GM10248 (cell line): ENCODE measurements at regions of chr4 and their contacts with region 1.

Region 1: DNA sequence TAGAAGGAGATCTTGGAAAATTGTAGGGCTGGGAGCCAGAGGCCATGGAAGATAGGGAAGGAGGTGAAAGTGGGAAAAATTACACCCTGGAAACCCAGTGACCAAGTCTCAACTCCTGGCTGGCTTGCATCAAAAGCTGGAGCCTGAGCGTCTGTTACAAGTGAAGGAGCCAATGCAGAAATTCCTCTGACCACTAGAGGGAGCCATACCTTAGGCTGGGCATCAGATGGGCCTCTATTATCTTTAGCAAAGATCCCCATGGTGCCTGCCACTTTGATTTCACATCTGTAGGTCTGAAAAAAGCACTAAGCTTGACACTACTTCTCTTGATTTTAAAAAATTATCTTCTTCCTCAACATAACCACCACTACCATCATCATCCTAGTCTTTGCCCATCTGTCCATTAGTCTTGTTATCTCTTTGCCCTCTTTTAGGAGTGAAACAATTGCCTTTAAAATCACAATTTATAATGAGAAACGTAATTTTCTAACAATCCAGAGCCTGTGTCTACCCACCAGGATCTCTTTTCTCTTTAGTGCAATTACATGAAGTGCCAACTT is 62.9 kb downstream of the ANAPC4 start:
- DNase-seq: peak; percentile 79
- CTCF ChIP-seq: peak; percentile 86

Region 2: DNA sequence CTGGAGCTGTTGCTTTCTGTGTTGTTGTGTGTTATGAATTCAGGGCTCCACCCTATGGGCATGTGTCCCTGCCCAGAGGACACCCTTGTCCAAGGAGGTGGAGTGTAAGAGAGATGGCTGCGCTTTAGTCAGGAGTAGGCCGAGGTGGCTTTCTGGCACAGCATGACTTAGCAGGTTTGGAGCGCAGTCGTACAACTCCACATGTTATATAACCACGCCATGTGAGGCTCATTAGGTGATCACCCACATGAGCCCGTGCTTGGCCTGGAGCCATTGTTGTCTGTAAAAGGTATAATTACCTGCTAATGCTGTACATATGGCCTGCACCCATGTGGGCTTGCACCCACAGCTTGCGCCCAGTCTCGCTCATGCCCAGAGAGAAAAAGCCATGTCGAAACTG is 78.7 kb before region 1 on chr4:
- CTCF ChIA-PET with region 1: no interaction called
- POLR2A ChIA-PET with region 1: no interaction called
- DNase-seq: no peak
- CTCF ChIP-seq: no peak

Region 3: DNA sequence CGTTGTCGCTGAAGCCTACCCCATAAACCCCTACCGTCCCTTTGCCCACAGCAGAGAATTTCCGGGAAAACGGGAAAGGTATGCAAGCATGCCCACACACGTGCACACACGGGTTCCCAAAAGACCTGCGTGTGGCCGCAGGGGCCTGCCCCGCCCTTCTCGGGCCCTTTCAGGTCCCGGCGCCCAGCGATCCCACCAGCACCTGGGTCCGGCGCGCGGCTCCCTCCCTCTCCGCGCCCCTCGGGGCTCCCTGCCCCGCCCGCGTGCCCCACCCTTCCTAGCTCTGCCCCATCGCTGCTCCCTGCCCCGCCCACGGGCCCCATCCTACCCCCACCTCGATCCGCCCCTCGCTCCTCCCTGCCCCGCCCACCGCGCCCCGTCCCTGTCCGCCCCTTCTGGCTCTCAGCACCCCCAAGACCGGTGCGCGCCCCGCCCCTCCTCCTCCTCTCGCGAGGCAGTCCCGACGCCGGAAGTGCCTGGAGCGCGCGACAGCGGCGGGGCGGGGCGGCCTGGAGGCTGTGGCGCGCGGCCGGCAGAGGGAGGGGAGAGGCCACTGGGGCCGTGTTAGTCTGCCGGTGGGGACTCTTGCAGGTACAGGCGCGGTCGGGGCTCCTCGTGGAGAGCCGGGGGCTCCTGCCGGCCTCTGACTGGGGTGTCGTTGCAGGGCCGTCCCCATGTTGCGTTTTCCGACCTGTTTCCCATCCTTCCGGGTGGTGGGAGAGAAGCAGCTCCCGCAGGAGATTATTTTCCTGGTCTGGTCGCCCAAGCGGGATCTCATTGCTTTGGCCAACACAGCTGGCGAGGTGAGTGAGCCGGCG is 63.0 kb before region 1 on chr4 and contains the start of gene ANAPC4:
- CTCF ChIA-PET with region 1: interaction called, 10 read pairs
- POLR2A ChIA-PET with region 1: no interaction called
- DNase-seq: peak; percentile 100
- CTCF ChIP-seq: no peak

Region 4: GRCh38 chr4:25421816-25422525 is 18.0 kb before region 1 on chr4:
- CTCF ChIA-PET with region 1: interaction called, 96 read pairs
- POLR2A ChIA-PET with region 1: no interaction called
- DNase-seq: no peak
- CTCF ChIP-seq: no peak

Region 5: DNA sequence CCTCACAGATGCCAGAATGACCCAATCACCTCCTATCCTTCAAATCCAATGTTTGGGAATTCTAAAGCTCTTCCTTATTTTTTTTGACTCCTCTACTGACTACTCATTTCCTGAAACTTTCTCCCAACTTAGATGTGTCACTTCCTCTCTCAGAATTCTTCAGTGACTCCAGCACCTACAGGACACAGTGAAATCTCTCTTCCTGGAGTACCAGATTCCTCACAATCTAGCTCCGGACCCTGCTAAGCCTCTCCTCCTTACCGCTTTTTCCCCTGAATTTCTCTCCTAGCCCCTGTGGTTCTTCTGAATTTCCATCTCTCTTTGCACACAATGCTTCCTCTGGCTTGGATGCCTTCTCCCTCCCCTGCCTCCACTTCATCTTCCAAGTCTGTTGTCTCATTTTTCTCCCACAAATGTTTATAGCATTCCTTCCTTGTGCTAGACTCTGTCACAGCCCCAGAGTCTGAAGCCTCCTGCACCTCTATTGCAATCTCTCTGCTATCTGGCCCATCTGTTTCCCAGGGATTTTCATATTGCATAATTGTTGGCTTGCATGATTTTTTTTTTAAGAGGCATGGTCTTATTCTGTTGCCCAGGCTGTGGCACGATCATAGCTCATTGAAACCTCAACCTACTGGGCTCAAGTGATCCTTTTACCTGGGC is 17.2 kb after region 1 on chr4:
- CTCF ChIA-PET with region 1: interaction called, 20 read pairs
- POLR2A ChIA-PET with region 1: no interaction called
- DNase-seq: no peak
- CTCF ChIP-seq: no peak

Region 6: DNA sequence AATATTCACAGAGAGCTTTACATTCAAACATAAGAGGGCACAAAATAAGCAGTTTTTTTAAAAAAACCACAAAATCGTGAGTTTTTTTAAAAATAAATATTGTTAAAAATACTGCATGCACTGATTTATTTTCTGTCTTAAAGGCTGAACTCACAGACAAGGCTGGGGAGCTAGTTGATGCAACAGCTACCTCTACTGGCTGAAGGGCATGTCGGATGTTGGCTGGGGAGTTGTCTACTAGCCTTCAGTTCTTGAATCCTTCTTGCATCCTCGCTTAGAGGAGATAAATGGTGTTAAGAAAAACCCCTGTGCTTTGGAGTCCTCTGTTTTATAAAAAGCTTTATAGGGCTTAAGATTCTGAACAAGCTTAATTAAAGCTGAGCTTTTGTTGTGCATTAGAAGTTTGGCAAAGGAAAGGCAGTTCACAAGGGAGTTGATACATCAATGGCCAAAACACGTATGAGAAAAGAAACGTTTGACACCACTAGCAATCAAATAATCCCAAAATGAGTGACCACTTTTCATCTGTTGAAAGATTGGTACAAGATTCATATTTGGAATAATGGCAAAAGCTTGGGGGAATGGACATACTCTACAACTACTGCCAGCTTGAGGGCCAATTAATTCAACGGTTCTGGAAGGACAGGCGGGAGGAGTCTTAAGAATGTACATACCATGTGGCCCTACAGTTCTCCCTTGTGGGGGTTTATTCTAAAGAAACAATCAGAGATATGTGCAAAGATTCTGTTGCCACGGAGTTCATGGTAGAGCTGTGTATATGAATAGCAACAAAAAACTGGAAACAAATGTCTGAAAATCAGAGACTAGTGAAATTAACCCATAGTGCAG is 328.1 kb after region 1 on chr4:
- CTCF ChIA-PET with region 1: interaction called, 49 read pairs
- POLR2A ChIA-PET with region 1: no interaction called
- DNase-seq: no peak
- CTCF ChIP-seq: peak; percentile 62